ENCODE measurements at regions of chr12 and their contacts with region 1.

Region 1: DNA sequence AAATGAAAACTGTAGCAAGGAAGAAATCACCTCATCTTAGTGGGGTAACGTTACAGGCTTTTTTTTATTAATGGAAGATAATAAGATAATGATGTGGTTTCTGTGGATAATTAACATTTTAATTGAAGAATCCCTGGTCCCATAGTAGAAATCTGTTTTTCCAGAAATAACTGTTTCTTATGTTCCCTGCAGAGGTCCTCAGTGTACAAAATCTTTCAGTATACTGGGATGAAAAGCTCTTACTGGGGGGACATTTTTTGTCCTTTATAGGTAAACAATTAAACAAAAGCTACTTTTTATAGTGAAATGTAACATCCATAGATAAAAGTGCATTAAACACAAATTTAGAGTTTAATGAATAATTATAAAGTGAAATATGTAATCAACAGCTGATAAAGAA is 312.2 kb downstream of the ATXN7L3B start:
- DNase-seq: no peak
- H3K4me3 Mint-ChIP-seq: peak overlapping the region; percentile 69
- H3K27ac Mint-ChIP-seq: peak overlapping the region; percentile 2
- H3K4me1 Mint-ChIP-seq: peaks cover 42% of the 10 kb centered on the region
- H3K27me3 Mint-ChIP-seq: no peaks in the 10 kb centered on the region
- CTCF ChIP-seq: peak; percentile 23

Region 2: GRCh38 chr12:74770552-74770951 is 79.2 kb before region 1 on chr12:
- CTCF ChIA-PET with region 1: no interaction called
- intact Hi-C with region 1: no loop called
- DNase-seq: no peak
- H3K4me3 Mint-ChIP-seq: no peak overlapping the region
- H3K27ac Mint-ChIP-seq: no peak overlapping the region
- H3K4me1 Mint-ChIP-seq: no peaks in the 10 kb centered on the region
- H3K27me3 Mint-ChIP-seq: no peaks in the 10 kb centered on the region
- CTCF ChIP-seq: no peak

Region 3: GRCh38 chr12:74801625-74802024 is 48.2 kb before region 1 on chr12:
- CTCF ChIA-PET with region 1: no interaction called
- intact Hi-C with region 1: loop called (anchors 5 kb)
- DNase-seq: no peak
- H3K4me3 Mint-ChIP-seq: no peak overlapping the region
- H3K27ac Mint-ChIP-seq: no peak overlapping the region
- H3K4me1 Mint-ChIP-seq: peaks cover 14% of the 10 kb centered on the region
- H3K27me3 Mint-ChIP-seq: no peaks in the 10 kb centered on the region
- CTCF ChIP-seq: no peak

Region 4: GRCh38 chr12:74945771-74946198 is 96.0 kb after region 1 on chr12:
- CTCF ChIA-PET with region 1: no interaction called
- intact Hi-C with region 1: loop called (anchors 5 kb)
- DNase-seq: no peak
- H3K4me3 Mint-ChIP-seq: no peak overlapping the region
- H3K27ac Mint-ChIP-seq: peak overlapping the region; percentile 64
- H3K4me1 Mint-ChIP-seq: peaks cover 13% of the 10 kb centered on the region
- H3K27me3 Mint-ChIP-seq: no peaks in the 10 kb centered on the region
- CTCF ChIP-seq: no peak

Region 5: DNA sequence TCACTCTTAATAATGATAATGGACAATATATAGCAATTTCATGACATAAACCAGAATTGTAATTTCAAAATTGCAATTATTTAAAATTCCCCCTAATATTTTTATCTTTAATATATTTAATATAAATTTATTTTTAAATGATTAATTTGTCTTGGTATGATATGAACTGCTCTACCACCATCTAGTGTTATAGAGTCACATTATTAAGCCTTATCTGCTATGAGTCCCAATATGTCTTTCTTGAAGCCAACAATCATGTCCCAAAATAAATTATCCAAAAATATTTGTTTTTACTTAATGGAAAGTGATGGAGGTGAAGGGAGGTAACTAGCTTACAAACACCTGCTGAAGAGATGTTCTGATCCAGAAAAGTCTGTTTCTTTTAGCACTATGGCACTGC is 208.4 kb after region 1 on chr12:
- CTCF ChIA-PET with region 1: no interaction called
- intact Hi-C with region 1: loop called (anchors 1 kb)
- DNase-seq: no peak
- H3K4me3 Mint-ChIP-seq: no peak overlapping the region
- H3K27ac Mint-ChIP-seq: no peak overlapping the region
- H3K4me1 Mint-ChIP-seq: no peaks in the 10 kb centered on the region
- H3K27me3 Mint-ChIP-seq: no peaks in the 10 kb centered on the region
- CTCF ChIP-seq: no peak

Region 6: GRCh38 chr12:75289753-75290152 is 440.0 kb after region 1 on chr12:
- CTCF ChIA-PET with region 1: no interaction called
- intact Hi-C with region 1: loop called (anchors 5 kb)
- DNase-seq: no peak
- H3K4me3 Mint-ChIP-seq: no peak overlapping the region
- H3K27ac Mint-ChIP-seq: no peak overlapping the region
- H3K4me1 Mint-ChIP-seq: no peaks in the 10 kb centered on the region
- H3K27me3 Mint-ChIP-seq: no peaks in the 10 kb centered on the region
- CTCF ChIP-seq: no peak